Naive thymus-derived CD4-positive, alpha-beta T cell (primary cell): ENCODE measurements at regions of chr10 and their contacts with region 1.

Region 1: DNA sequence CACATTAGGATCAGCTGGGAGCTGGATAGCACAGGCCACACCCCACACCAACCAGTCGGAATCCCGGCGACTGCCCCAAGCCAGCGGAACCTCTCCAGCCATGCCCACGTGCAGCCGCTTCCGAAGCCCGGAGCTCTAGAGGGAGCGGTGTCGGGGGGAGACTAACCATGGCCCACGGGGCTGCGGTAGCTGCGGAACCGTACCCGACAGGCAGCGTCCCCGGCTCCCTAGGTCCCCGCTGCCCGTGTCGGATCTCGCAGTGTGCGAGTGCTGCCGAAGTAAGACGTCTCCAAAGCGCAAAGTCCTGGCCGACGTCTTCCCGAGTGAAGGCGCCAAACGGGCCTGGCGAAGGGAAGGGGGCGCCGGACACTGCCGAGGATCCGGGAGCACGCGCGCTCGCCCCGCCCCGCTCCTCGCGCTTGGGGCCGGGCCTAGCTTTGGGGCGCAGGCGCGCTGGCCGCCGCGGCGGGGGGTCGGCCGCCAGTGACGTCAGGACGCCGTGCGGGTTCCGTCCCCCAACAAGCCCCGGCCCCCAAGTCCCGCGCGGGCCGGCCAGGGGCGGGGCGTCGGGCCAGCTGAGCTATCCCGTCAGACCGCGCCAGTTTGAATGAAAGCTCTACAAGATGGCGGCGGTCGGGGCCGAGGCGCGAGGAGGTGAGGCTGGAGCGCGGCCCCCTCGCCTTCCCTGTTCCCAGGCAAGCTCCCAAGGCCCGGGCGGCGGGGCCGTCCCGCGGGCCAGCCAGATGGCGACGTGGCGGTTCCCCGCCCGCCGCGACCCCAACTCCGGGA is at the start of gene SUV39H2:
- DNase-seq: peak; percentile 81 to 97 (median 87)
- ATAC-seq: peak; percentile 93
- H3K4me3 ChIP-seq: peak within 1 kb of the TSS; percentile 92
- H3K4me3 Mint-ChIP-seq: peak within 1 kb of the TSS; percentile 92 to 97 (median 94)
- H3K27ac ChIP-seq: peak within 1 kb of the TSS; percentile 87
- H3K27ac Mint-ChIP-seq: peak within 1 kb of the TSS; percentile 71 to 94 (median 91)
- H3K4me1 ChIP-seq: peaks cover 4 to 7% of the 10 kb centered on the region in 2 donors
- H3K4me1 Mint-ChIP-seq: peaks cover 7 to 46% (median 41%) of the 10 kb centered on the region in 7 donors
- H3K27me3 ChIP-seq: no peaks in the 10 kb centered on the region
- H3K27me3 Mint-ChIP-seq: no peaks in the 10 kb centered on the region
- total RNA-seq, gene SUV39H2: 2.4 to 25.0 (median 6.8) TPM

Region 2: DNA sequence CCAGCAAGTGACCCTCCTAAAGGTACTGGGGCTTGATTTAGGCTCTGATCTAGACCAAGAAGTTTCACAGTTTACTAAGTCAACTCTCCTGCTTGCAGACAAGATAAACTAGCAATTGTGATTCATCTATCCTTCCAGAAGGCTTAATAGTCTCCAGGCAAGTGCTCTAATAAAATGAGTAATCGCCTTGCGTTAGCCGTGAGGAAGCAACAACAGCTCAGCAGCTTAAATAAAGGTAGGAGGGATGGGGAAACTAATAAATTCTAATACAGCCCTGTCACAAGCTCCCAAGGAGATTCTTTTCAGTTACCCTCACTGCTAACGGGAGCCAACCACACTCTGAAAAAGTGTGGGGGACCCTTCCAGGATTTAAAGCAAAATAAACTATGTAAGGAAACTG is 596.2 kb before region 1 on chr10:
- CTCF ChIA-PET with region 1: no interaction called
- POLR2A ChIA-PET with region 1: no interaction called
- intact Hi-C with region 1: no loop called
- DNase-seq: no peak
- ATAC-seq: no peak
- H3K4me3 ChIP-seq: no peak overlapping the region
- H3K4me3 Mint-ChIP-seq: no peak overlapping the region
- H3K27ac ChIP-seq: no peak overlapping the region
- H3K27ac Mint-ChIP-seq: no peak overlapping the region
- H3K4me1 ChIP-seq: no peaks in the 10 kb centered on the region
- H3K4me1 Mint-ChIP-seq: no peaks in the 10 kb centered on the region
- H3K27me3 ChIP-seq: no peaks in the 10 kb centered on the region
- H3K27me3 Mint-ChIP-seq: peaks cover 4 to 23% (median 15%) of the 10 kb centered on the region in 5 donors

Region 3: GRCh38 chr10:14500172-14500765 is 378.2 kb before region 1 on chr10:
- CTCF ChIA-PET with region 1: no interaction called
- POLR2A ChIA-PET with region 1: no interaction called
- intact Hi-C with region 1: loop called in 1 of 2 experiments (anchors 5 kb)
- DNase-seq: no peak
- ATAC-seq: no peak
- H3K4me3 ChIP-seq: no peak overlapping the region
- H3K4me3 Mint-ChIP-seq: no peak overlapping the region
- H3K27ac ChIP-seq: no peak overlapping the region
- H3K27ac Mint-ChIP-seq: peak overlapping the region in 4 of 9 donors; percentile 28 to 56 (median 40)
- H3K4me1 ChIP-seq: no peaks in the 10 kb centered on the region
- H3K4me1 Mint-ChIP-seq: peaks cover 4 to 15% (median 6%) of the 10 kb centered on the region in 7 donors
- H3K27me3 ChIP-seq: no peaks in the 10 kb centered on the region
- H3K27me3 Mint-ChIP-seq: peaks cover 0 to 12% (median 0%) of the 10 kb centered on the region in 5 donors

Region 4: GRCh38 chr10:14583252-14583651 is 295.2 kb before region 1 on chr10:
- CTCF ChIA-PET with region 1: no interaction called
- POLR2A ChIA-PET with region 1: no interaction called
- intact Hi-C with region 1: loop called in 1 of 2 experiments (anchors 5 kb)
- DNase-seq: peak; percentile 47 to 92 (median 87)
- ATAC-seq: peak; percentile 79
- H3K4me3 ChIP-seq: peak overlapping the region; percentile 10
- H3K4me3 Mint-ChIP-seq: peak overlapping the region; percentile 76 to 90 (median 82)
- H3K27ac ChIP-seq: peak overlapping the region; percentile 83
- H3K27ac Mint-ChIP-seq: peak overlapping the region; percentile 96 to 100 (median 99)
- H3K4me1 ChIP-seq: peaks cover 75 to 77% of the 10 kb centered on the region in 2 donors
- H3K4me1 Mint-ChIP-seq: peaks cover 69 to 99% (median 92%) of the 10 kb centered on the region in 7 donors
- H3K27me3 ChIP-seq: no peaks in the 10 kb centered on the region
- H3K27me3 Mint-ChIP-seq: no peaks in the 10 kb centered on the region

Region 5: DNA sequence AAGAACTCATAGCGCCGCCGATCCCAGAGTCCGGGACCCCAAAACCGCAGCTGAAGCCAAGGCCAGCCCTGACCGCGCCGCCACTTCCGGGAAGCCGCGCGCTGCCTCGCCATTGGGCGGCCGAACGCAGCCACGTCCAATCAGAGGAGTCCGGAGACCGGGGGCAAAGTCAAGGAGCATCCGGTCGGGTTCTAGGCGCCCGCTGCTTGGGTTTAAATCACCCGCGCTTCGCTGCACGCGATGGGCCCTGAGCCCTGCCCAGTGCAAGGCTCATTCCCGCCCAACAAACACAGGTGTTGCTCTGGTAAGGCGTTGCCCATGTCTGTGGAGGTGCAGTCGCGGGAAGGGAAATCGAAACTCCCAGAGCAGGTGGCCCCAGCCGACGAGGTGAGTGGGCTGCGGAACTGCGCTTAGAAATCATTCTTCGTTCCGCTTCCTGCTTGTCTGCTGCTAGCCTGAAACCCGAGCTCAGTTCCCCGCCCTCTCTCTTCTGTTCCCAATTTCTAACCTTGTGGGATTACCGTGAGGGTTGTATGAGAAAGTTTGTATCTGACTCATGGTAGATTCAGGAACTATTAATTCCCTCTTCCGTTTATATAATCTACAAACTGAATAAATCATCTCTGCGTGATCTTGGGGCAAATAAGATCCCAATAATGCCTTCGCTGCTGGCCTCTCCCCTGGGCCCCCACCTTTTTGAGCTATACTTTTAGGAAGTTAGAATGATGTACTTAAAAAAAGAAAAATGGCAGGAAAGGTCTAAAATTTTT is 75.7 kb after region 1 on chr10 and contains the start of gene DCLRE1C:
- CTCF ChIA-PET with region 1: interaction called, 3 read pairs
- POLR2A ChIA-PET with region 1: interaction called, 8 read pairs
- intact Hi-C with region 1: loop called (anchors 1 kb)
- DNase-seq: peak; percentile 70 to 89 (median 87)
- ATAC-seq: peak; percentile 90
- H3K4me3 ChIP-seq: peak within 1 kb of the TSS; percentile 97
- H3K4me3 Mint-ChIP-seq: peak within 1 kb of the TSS; percentile 89 to 96 (median 92)
- H3K27ac ChIP-seq: peak within 1 kb of the TSS; percentile 78
- H3K27ac Mint-ChIP-seq: peak within 1 kb of the TSS; percentile 91 to 97 (median 96)
- H3K4me1 ChIP-seq: peaks cover 29 to 32% of the 10 kb centered on the region in 2 donors
- H3K4me1 Mint-ChIP-seq: peaks cover 29 to 69% (median 65%) of the 10 kb centered on the region in 7 donors
- H3K27me3 ChIP-seq: no peaks in the 10 kb centered on the region
- H3K27me3 Mint-ChIP-seq: no peaks in the 10 kb centered on the region
- total RNA-seq, gene DCLRE1C: 16.4 to 38.7 (median 24.2) TPM

Region 6: DNA sequence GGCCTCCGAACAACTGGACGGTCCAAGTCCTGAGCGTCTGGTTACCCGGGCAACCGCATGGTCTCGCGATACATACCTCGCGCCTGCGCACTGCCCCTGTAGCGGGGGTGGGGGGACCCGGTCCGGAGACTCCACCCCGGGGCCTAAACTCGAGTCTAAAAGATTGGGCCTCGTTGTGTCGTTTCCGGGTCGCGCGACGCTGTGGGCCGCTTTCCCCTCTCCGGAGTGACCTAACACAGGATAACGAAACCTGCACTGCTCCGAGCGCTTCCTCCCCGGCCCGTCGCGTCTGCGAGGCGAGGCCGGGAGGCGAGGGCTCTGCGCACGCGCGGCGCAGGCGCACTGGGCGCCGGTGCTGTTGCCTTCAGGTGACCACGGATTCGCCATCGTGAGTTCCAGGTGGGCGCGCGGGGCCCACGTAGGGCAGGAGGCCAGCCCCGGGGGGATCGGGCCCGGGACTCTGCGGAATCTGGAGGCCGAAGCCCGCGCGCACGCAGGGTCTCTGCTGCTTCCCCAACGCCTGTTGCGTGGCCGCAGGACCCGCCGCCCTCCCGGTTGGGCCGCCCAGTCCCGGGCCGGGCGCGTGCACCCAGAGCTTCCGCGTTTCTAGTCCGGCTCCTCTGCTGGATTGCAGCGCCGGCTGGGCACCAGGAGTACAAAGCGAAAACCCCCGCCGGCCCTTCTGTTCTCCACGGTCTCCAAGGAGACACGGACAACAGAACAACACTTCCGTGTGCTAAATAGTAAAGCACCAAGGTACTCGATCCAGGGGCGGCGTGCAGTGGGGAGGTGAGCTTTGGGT is 218.8 kb after region 1 on chr10 and contains the start of gene RPP38:
- CTCF ChIA-PET with region 1: no interaction called
- POLR2A ChIA-PET with region 1: no interaction called
- intact Hi-C with region 1: loop called (anchors 1 kb)
- DNase-seq: peak; percentile 88 to 98 (median 95)
- ATAC-seq: peak; percentile 85
- H3K4me3 ChIP-seq: peak within 1 kb of the TSS; percentile 80
- H3K4me3 Mint-ChIP-seq: peak within 1 kb of the TSS; percentile 91 to 100 (median 98)
- H3K27ac ChIP-seq: peak within 1 kb of the TSS; percentile 94
- H3K27ac Mint-ChIP-seq: peak within 1 kb of the TSS; percentile 94 to 100 (median 98)
- H3K4me1 ChIP-seq: peaks cover 16 to 22% of the 10 kb centered on the region in 2 donors
- H3K4me1 Mint-ChIP-seq: peaks cover 22 to 50% (median 40%) of the 10 kb centered on the region in 7 donors
- H3K27me3 ChIP-seq: no peaks in the 10 kb centered on the region
- H3K27me3 Mint-ChIP-seq: peaks cover 0 to 3% (median 0%) of the 10 kb centered on the region in 5 donors
- total RNA-seq, gene RPP38: 7.6 to 22.4 (median 16.0) TPM

Region 7: GRCh38 chr10:16436758-16437539 is 1558.5 kb after region 1 on chr10 and contains the start of gene PTER:
- CTCF ChIA-PET with region 1: no interaction called
- POLR2A ChIA-PET with region 1: no interaction called
- intact Hi-C with region 1: loop called in 1 of 2 experiments (anchors 10 kb)
- DNase-seq: peak; percentile 92 to 99 (median 94)
- ATAC-seq: peak; percentile 100
- H3K4me3 ChIP-seq: peak within 1 kb of the TSS; percentile 93
- H3K4me3 Mint-ChIP-seq: peak within 1 kb of the TSS; percentile 91 to 99 (median 96)
- H3K27ac ChIP-seq: peak within 1 kb of the TSS; percentile 77
- H3K27ac Mint-ChIP-seq: peak within 1 kb of the TSS; percentile 87 to 97 (median 94)
- H3K4me1 ChIP-seq: peaks cover 13 to 28% of the 10 kb centered on the region in 2 donors
- H3K4me1 Mint-ChIP-seq: peaks cover 36 to 57% (median 48%) of the 10 kb centered on the region in 7 donors
- H3K27me3 ChIP-seq: no peaks in the 10 kb centered on the region
- H3K27me3 Mint-ChIP-seq: peaks cover 0 to 19% (median 0%) of the 10 kb centered on the region in 5 donors
- total RNA-seq, gene PTER: 12.9 to 23.7 (median 15.3) TPM